Caco-2 (cell line): ENCODE measurements at regions of chr2 and their contacts with region 1.

Region 1: DNA sequence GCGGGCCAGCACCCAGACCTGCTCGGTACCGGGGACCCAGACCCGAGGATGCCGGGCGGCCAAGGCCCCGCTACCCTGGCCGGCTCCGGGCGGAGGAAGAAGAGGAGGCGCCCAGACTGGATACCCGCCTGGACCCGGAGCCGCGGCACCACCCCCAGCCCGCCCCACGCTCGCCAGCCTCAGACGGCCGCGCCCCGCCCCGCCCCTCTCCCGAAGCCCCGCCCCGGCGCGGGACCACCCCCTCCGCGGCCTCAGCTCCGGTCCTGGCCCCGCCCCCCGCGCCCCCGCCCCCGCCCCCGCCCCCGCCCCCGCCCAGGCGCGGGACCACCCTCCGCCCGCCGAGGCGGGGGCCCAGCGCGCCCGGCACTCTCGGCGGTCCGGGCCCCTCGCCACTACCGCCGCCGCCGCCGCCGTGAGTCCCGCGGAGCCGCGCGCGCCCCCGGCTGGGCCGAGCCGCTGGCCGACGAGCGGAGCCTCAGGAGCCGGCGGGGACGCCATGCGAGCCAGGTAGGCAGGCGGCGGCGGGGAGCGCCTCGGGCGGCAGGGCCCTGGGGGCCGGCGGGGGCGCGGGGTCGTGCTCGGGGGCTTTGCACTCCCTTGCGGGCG is at the start of gene SH3BP4:
- DNase-seq: peak; percentile 73 to 78
- H3K4me3 ChIP-seq: peak within 1 kb of the TSS; percentile 63
- H3K4me3 Mint-ChIP-seq: peak within 1 kb of the TSS; percentile 74
- H3K27ac Mint-ChIP-seq: peak within 1 kb of the TSS; percentile 45
- H3K4me1 ChIP-seq: peaks cover 26% of the 10 kb centered on the region
- H3K4me1 Mint-ChIP-seq: peaks cover 12% of the 10 kb centered on the region
- H3K27me3 ChIP-seq: no peaks in the 10 kb centered on the region
- H3K27me3 Mint-ChIP-seq: no peaks in the 10 kb centered on the region
- CTCF ChIP-seq: no peak
- total RNA-seq, gene SH3BP4: 29.1 and 29.9 TPM in 2 replicates

Region 2: DNA sequence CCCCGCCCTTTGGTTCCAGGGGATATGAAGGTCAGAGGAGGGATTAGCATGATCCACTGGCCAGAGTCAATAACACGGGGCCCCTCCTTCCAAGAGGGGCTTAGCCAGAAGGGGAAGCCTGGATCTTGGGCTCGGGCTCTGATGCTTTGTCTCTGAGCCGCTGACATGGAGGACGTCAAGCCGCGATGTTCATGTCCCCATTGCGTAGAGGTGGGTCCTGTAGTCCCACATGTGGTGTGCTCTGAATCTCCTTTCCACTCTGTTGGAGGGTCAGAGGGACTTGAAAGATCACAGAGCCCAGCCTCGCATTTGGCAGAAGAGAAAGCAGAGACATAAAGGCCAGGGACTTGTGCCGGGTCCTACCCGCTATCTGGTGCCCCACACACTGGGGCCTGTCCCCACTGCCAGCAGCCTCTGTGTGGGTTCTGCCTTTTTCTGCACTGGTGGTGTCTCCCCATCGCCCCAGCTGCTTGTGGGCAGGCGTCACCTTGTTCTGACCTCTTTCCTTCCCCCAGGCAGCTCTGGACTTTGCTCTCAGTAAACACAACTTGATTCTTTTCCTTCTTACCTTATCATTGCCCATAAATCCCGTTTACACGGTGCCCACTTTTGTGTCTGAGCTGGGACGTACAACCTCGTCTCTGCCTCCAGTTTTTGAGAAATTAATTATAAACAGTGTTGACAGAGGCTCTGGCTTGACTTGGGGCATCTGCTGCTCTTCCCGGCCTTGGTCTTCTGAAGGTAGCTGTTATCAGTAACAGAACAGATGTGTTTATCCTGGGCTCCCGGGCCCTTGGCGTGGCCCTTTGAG is 48.9 kb after region 1 on chr2:
- CTCF ChIA-PET with region 1: interaction called, 3 read pairs
- POLR2A ChIA-PET with region 1: no interaction called
- intact Hi-C with region 1: loop called (anchors 2 kb)
- DNase-seq: peak; percentile 76 to 84
- H3K4me3 ChIP-seq: no peak overlapping the region
- H3K4me3 Mint-ChIP-seq: peak overlapping the region; percentile 57
- H3K27ac Mint-ChIP-seq: peak overlapping the region; percentile 52
- H3K4me1 ChIP-seq: peaks cover 92% of the 10 kb centered on the region
- H3K4me1 Mint-ChIP-seq: peaks cover 22% of the 10 kb centered on the region
- H3K27me3 ChIP-seq: no peaks in the 10 kb centered on the region
- H3K27me3 Mint-ChIP-seq: no peaks in the 10 kb centered on the region
- CTCF ChIP-seq: no peak